ENCODE measurements at regions of chr16 and their contacts with region 1.

Region 1: DNA sequence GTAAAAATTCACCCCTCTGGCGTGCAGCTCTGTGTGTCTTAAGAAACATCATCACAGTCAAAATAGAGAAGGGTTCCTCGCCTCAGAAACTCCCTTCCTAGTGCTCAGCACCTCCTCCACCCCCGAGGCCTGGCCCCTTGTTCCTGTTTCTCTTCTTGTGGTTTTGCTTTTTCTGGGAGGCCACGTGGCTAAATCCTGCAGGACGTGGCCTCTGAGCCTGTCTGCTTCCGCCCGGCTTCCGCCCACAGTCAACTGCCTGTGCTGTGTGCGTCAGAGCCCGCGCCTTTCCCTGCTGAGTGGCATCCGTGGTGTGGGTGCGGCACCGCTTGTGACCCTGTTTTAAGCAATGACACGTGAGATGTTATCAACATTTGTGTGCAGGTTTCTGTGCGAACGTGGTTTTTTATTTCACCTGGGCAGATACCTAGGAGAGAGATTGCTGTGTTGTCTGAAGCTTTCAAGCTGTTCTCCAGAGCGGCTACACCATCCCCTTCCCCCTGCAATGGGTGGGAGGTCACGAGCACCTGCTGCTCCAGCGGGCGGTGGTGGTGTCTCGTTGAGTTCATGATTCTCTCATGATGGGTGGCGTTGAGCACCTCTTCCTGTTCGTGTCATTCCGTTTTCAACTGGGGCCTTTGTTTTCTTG is 21.7 kb downstream of the ACSF3 start:
- DNase-seq: peak; percentile 73 to 98 (median 96)
- ATAC-seq: peak; percentile 95
- H3K4me3 ChIP-seq: peak overlapping the region; percentile 59
- H3K4me3 Mint-ChIP-seq: peak overlapping the region; percentile 81 to 92 (median 87)
- H3K27ac ChIP-seq: peak overlapping the region; percentile 89
- H3K27ac Mint-ChIP-seq: peak overlapping the region in 6 of 9 donors; percentile 95 to 100 (median 96)
- H3K4me1 ChIP-seq: peaks cover 30 to 52% of the 10 kb centered on the region in 2 donors
- H3K4me1 Mint-ChIP-seq: peaks cover 30 to 66% (median 50%) of the 10 kb centered on the region in 7 donors
- H3K27me3 ChIP-seq: no peaks in the 10 kb centered on the region
- H3K27me3 Mint-ChIP-seq: no peaks in the 10 kb centered on the region

Region 2: GRCh38 chr16:88811769-88812512 is 303.4 kb before region 1 on chr16 and contains the start of gene APRT:
- CTCF ChIA-PET with region 1: no interaction called
- POLR2A ChIA-PET with region 1: interaction called, 4 read pairs
- intact Hi-C with region 1: loop called in 1 of 2 experiments (anchors 1 kb)
- DNase-seq: peak; percentile 92 to 100 (median 98)
- ATAC-seq: peak; percentile 95
- H3K4me3 ChIP-seq: peak within 1 kb of the TSS; percentile 97
- H3K4me3 Mint-ChIP-seq: peak within 1 kb of the TSS; percentile 92 to 99 (median 96)
- H3K27ac ChIP-seq: peak within 1 kb of the TSS; percentile 84
- H3K27ac Mint-ChIP-seq: peak within 1 kb of the TSS; percentile 79 to 98 (median 95)
- H3K4me1 ChIP-seq: peaks cover 8 to 11% of the 10 kb centered on the region in 2 donors
- H3K4me1 Mint-ChIP-seq: peaks cover 0 to 26% (median 12%) of the 10 kb centered on the region in 7 donors
- H3K27me3 ChIP-seq: no peaks in the 10 kb centered on the region
- H3K27me3 Mint-ChIP-seq: no peaks in the 10 kb centered on the region
- total RNA-seq, gene APRT: 134 to 178 (median 161) TPM

Region 3: GRCh38 chr16:89031715-89032659 is 83.4 kb before region 1 on chr16:
- CTCF ChIA-PET with region 1: no interaction called
- POLR2A ChIA-PET with region 1: no interaction called
- intact Hi-C with region 1: loop called in 1 of 2 experiments (anchors 1 kb)
- DNase-seq: peak in 8 of 9 donors; percentile 58 to 77 (median 71)
- ATAC-seq: peak; percentile 99
- H3K4me3 ChIP-seq: peak overlapping the region; percentile 45
- H3K4me3 Mint-ChIP-seq: peak overlapping the region; percentile 67 to 83 (median 76)
- H3K27ac ChIP-seq: peak overlapping the region; percentile 28
- H3K27ac Mint-ChIP-seq: peak overlapping the region; percentile 22 to 85 (median 79)
- H3K4me1 ChIP-seq: peaks cover 13 to 33% of the 10 kb centered on the region in 2 donors
- H3K4me1 Mint-ChIP-seq: peaks cover 31 to 50% (median 40%) of the 10 kb centered on the region in 7 donors
- H3K27me3 ChIP-seq: no peaks in the 10 kb centered on the region
- H3K27me3 Mint-ChIP-seq: peaks cover 0 to 4% (median 0%) of the 10 kb centered on the region in 5 donors

Region 4: DNA sequence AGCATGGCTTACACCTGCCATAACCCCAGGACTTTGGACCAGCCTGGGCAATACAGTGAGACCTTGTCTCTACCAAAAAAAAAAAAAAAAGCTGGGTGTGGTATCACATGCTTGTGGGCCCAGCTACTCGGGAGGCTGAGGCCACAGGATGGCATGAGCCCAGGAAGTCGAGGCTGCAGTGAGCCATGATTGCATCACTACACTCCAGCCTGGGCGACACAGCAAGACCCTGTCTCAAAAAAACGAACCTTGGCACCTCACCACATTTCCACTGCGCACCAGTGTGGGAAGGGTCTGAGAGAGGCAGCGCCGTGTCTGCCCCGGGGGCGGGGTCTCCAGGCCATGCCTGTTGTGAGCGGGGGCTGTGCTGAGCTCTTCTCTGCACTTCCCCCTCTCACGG is 15.4 kb before region 1 on chr16:
- CTCF ChIA-PET with region 1: interaction called, 8 read pairs
- POLR2A ChIA-PET with region 1: interaction called, 65 read pairs
- intact Hi-C with region 1: loop called (anchors 1 kb)
- DNase-seq: no peak
- ATAC-seq: no peak
- H3K4me3 ChIP-seq: no peak overlapping the region
- H3K4me3 Mint-ChIP-seq: peak overlapping the region in 7 of 10 donors; percentile 20 to 96 (median 53)
- H3K27ac ChIP-seq: no peak overlapping the region
- H3K27ac Mint-ChIP-seq: peak overlapping the region; percentile 51 to 100 (median 83)
- H3K4me1 ChIP-seq: peaks cover 42 to 66% of the 10 kb centered on the region in 2 donors
- H3K4me1 Mint-ChIP-seq: peaks cover 46 to 84% (median 70%) of the 10 kb centered on the region in 7 donors
- H3K27me3 ChIP-seq: no peaks in the 10 kb centered on the region
- H3K27me3 Mint-ChIP-seq: no peaks in the 10 kb centered on the region

Region 5: DNA sequence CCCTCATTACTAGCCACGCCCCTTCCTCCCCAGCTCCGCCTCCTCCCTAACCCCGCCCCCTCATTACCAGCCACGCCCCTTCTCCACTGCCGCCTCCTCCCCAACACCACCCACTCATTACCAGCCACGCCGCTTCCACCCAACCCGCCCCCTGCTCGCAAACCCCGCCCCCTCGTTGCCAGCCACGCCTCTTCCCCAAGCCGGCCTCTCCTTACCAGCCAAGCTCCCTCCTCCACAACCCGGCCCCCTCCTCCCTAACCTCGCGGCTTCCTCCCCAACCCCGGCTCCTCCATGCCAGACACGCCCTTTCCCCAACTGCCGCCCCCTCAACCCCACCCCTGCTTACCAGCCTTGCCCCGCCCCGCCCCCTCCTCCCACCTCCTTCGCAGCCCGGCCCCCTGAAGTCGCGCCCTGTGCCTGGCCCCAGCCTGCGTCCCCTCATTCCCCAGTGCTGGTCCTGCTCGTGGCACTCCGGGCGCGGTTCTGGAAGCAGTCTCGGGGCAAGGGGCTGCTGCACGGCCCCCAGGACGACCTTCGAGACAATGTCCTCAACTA is 77.8 kb after region 1 on chr16:
- CTCF ChIA-PET with region 1: no interaction called
- POLR2A ChIA-PET with region 1: no interaction called
- intact Hi-C with region 1: loop called in 1 of 2 experiments (anchors 2 kb)
- DNase-seq: peak in 6 of 9 donors; percentile 45 to 61 (median 52)
- ATAC-seq: no peak
- H3K4me3 ChIP-seq: no peak overlapping the region
- H3K4me3 Mint-ChIP-seq: peak overlapping the region in 3 of 10 donors; percentile 6 to 47 (median 25)
- H3K27ac ChIP-seq: no peak overlapping the region
- H3K27ac Mint-ChIP-seq: no peak overlapping the region
- H3K4me1 ChIP-seq: no peaks in the 10 kb centered on the region
- H3K4me1 Mint-ChIP-seq: peaks cover 0 to 5% (median 0%) of the 10 kb centered on the region in 7 donors
- H3K27me3 ChIP-seq: no peaks in the 10 kb centered on the region
- H3K27me3 Mint-ChIP-seq: peaks cover 0 to 8% (median 2%) of the 10 kb centered on the region in 5 donors

Region 6: GRCh38 chr16:89241187-89242007 is 126.1 kb after region 1 on chr16:
- CTCF ChIA-PET with region 1: no interaction called
- POLR2A ChIA-PET with region 1: no interaction called
- intact Hi-C with region 1: loop called in 1 of 2 experiments (anchors 2 kb)
- DNase-seq: peak; percentile 75 to 95 (median 93)
- ATAC-seq: peak; percentile 86
- H3K4me3 ChIP-seq: peak overlapping the region; percentile 68
- H3K4me3 Mint-ChIP-seq: peak overlapping the region; percentile 83 to 100 (median 96)
- H3K27ac ChIP-seq: peak overlapping the region; percentile 91
- H3K27ac Mint-ChIP-seq: peak overlapping the region; percentile 94 to 100 (median 99)
- H3K4me1 ChIP-seq: peaks cover 5 to 6% of the 10 kb centered on the region in 2 donors
- H3K4me1 Mint-ChIP-seq: peaks cover 0 to 31% (median 18%) of the 10 kb centered on the region in 7 donors
- H3K27me3 ChIP-seq: no peaks in the 10 kb centered on the region
- H3K27me3 Mint-ChIP-seq: no peaks in the 10 kb centered on the region

Measured in naive thymus-derived CD4-positive, alpha-beta T cell (primary cell).